Activated CD8-positive, alpha-beta T cell treated with anti-CD3 and anti-CD28 coated beads for 36 hours (primary cell): ENCODE measurements at regions of chr12 and their contacts with region 1.

Region 1: GRCh38 chr12:43501703-43502102 is 50.3 kb downstream of the ADAMTS20 start:
- DNase-seq: no peak
- ATAC-seq: no peak
- H3K4me3 Mint-ChIP-seq: no peak overlapping the region
- H3K27ac Mint-ChIP-seq: no peak overlapping the region
- H3K4me1 Mint-ChIP-seq: no peaks in the 10 kb centered on the region
- H3K27me3 Mint-ChIP-seq: peaks cover under 1% of the 10 kb centered on the region
- CTCF ChIP-seq: peak; percentile 34

Region 2: DNA sequence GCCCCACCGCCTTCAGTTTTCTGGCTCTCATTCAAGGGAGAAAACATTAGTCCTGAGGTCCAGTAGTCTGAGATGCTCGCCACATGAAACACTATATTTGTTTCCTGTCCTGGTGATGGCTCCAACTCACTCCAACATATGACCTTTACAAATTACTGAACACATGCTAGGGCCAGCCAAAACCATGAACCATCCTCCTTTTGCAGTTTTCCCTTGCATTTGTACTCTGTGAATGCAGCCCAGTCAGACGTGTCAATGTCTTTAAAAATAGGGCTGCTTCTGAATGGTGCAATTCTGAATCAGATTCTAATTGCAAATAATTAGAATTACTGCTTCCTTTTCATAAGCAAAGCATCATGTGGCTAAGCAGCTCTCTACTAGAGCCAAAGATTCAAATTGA is 14.3 kb after region 1 on chr12:
- CTCF ChIA-PET with region 1: no interaction called
- POLR2A ChIA-PET with region 1: no interaction called
- intact Hi-C with region 1: no loop called
- DNase-seq: no peak
- ATAC-seq: no peak
- H3K4me3 Mint-ChIP-seq: no peak overlapping the region
- H3K27ac Mint-ChIP-seq: no peak overlapping the region
- H3K4me1 Mint-ChIP-seq: no peaks in the 10 kb centered on the region
- H3K27me3 Mint-ChIP-seq: no peaks in the 10 kb centered on the region
- CTCF ChIP-seq: no peak

Region 3: GRCh38 chr12:43540470-43540869 is 38.8 kb after region 1 on chr12:
- CTCF ChIA-PET with region 1: no interaction called
- POLR2A ChIA-PET with region 1: no interaction called
- intact Hi-C with region 1: no loop called
- DNase-seq: no peak
- ATAC-seq: no peak
- H3K4me3 Mint-ChIP-seq: no peak overlapping the region
- H3K27ac Mint-ChIP-seq: no peak overlapping the region
- H3K4me1 Mint-ChIP-seq: no peaks in the 10 kb centered on the region
- H3K27me3 Mint-ChIP-seq: no peaks in the 10 kb centered on the region
- CTCF ChIP-seq: no peak

Region 4: DNA sequence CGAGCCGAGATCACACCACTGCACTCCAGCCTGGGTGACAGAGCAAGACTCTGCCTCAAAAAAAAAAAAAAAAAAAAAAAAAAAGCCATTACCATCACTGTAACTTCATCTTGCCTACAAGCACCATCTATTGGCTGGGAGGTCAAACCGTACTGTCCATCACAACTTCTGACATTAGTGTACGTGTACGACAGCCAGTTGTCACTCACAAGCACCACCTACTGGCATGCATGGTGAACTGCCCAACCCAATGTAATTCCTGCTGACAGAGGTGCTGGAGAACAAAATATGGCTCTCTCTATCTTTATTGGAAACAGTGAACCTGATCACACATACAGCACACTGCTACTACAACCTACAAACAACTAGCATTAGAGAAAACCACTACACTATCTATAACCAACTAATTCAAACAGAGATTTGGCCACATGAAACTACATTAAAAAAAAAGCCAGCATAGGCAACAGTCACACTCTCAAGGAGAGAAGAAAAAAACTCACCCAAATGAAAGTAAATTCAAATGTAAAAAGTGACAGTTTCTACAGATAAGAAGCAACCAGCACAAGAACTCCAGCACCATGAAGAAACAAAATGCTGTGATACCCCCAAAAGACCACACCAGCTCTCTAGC is 174.6 kb after region 1 on chr12:
- CTCF ChIA-PET with region 1: no interaction called
- POLR2A ChIA-PET with region 1: no interaction called
- intact Hi-C with region 1: loop called (anchors 10 kb)
- DNase-seq: peak; percentile 26
- ATAC-seq: peak; percentile 71
- H3K4me3 Mint-ChIP-seq: no peak overlapping the region
- H3K27ac Mint-ChIP-seq: no peak overlapping the region
- H3K4me1 Mint-ChIP-seq: no peaks in the 10 kb centered on the region
- H3K27me3 Mint-ChIP-seq: peaks cover 13% of the 10 kb centered on the region
- CTCF ChIP-seq: peak; percentile 47